CD4-positive, alpha-beta T cell (primary cell): ENCODE measurements at regions of chr12 and their contacts with region 1.

Region 1: GRCh38 chr12:103908866-103909265 is 21.3 kb upstream of the HSP90B1 start:
- DNase-seq: no peak
- ATAC-seq: no peak
- H3K4me3 ChIP-seq: no peak overlapping the region
- H3K4me3 Mint-ChIP-seq: peak overlapping the region; percentile 9
- H3K27ac ChIP-seq: no peak overlapping the region
- H3K27ac Mint-ChIP-seq: peak overlapping the region; percentile 88
- H3K4me1 ChIP-seq: peaks cover 30% of the 10 kb centered on the region
- H3K4me1 Mint-ChIP-seq: peaks cover 53% of the 10 kb centered on the region
- H3K27me3 ChIP-seq: no peaks in the 10 kb centered on the region
- H3K27me3 Mint-ChIP-seq: no peaks in the 10 kb centered on the region
- CTCF ChIP-seq: no peak

Region 2: GRCh38 chr12:103924761-103925641 is 16.1 kb after region 1 on chr12:
- CTCF ChIA-PET with region 1: no interaction called
- POLR2A ChIA-PET with region 1: interaction called, 208 read pairs
- intact Hi-C with region 1: loop called in 1 of 2 experiments (anchors 2 kb)
- DNase-seq: peak in 6 of 14 experiments; percentile 6 to 56 (median 32)
- ATAC-seq: no peak
- H3K4me3 ChIP-seq: no peak overlapping the region
- H3K4me3 Mint-ChIP-seq: peak overlapping the region; percentile 42
- H3K27ac ChIP-seq: no peak overlapping the region
- H3K27ac Mint-ChIP-seq: peak overlapping the region; percentile 52
- H3K4me1 ChIP-seq: peaks cover 31% of the 10 kb centered on the region
- H3K4me1 Mint-ChIP-seq: peaks cover 45% of the 10 kb centered on the region
- H3K27me3 ChIP-seq: no peaks in the 10 kb centered on the region
- H3K27me3 Mint-ChIP-seq: peaks cover 1% of the 10 kb centered on the region
- CTCF ChIP-seq: no peak